ENCODE measurements at regions of chr17 and their contacts with region 1.

Region 1: GRCh38 chr17:75430159-75430974 is 24.9 kb upstream of the GRB2 start:
- DNase-seq: no peak
- ATAC-seq: peak in 1 of 8 donors; percentile 18
- H3K4me3 ChIP-seq: no peak overlapping the region
- H3K27ac ChIP-seq: peak overlapping the region in 2 of 10 donors; percentile 10 to 50
- H3K4me1 ChIP-seq: peaks cover 0 to 31% (median 14%) of the 10 kb centered on the region in 9 donors
- H3K27me3 ChIP-seq: no peaks in the 10 kb centered on the region
- CTCF ChIP-seq: no peak

Region 2: GRCh38 chr17:75289115-75289831 is 141.1 kb before region 1 on chr17 and contains the start of gene SLC25A19:
- intact Hi-C with region 1: no loop called
- DNase-seq: peak; percentile 98 to 99
- ATAC-seq: peak; percentile 98 to 100 (median 99)
- H3K4me3 ChIP-seq: peak within 1 kb of the TSS; percentile 59 to 98 (median 90)
- H3K27ac ChIP-seq: peak within 1 kb of the TSS; percentile 46 to 97 (median 90)
- H3K4me1 ChIP-seq: peaks cover 0 to 42% (median 10%) of the 10 kb centered on the region in 9 donors
- H3K27me3 ChIP-seq: no peaks in the 10 kb centered on the region
- CTCF ChIP-seq: peak in 5 of 9 donors; percentile 16 to 35 (median 28)
- total RNA-seq, gene SLC25A19: 6.8 to 19.2 (median 11.3) TPM

Region 3: DNA sequence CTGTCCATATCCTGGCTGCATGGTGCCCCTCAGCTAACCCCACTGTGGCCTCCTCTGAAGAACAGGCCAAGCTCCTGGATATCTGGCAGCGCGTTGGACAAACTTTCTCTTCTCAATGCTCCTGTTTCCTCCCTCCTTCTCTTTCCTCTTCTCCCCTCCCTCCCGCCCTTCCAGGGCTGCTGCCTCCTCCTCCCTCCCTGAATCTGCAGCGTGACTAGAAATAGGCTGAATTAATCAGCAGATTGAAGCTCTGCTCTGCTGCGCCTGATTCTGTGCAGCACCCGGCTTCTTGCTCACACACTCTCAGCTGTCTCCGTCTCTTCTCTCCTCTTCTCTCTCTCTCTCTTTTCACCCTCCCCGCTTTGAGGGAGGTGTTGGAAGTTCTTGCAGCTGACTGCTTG is 45.9 kb after region 1 on chr17:
- intact Hi-C with region 1: loop called in 1 of 10 experiments (anchors 10 kb)
- DNase-seq: no peak
- ATAC-seq: peak; percentile 60 to 85 (median 76)
- H3K4me3 ChIP-seq: peak overlapping the region in 8 of 10 donors; percentile 8 to 44 (median 34)
- H3K27ac ChIP-seq: peak overlapping the region; percentile 57 to 90 (median 81)
- H3K4me1 ChIP-seq: peaks cover 28 to 80% (median 45%) of the 10 kb centered on the region in 9 donors
- H3K27me3 ChIP-seq: no peaks in the 10 kb centered on the region
- CTCF ChIP-seq: no peak

Region 4: GRCh38 chr17:75487351-75488070 is 57.1 kb after region 1 on chr17:
- intact Hi-C with region 1: no loop called
- DNase-seq: peak in 1 of 2 donors; percentile 36
- ATAC-seq: peak in 7 of 8 donors; percentile 27 to 60 (median 43)
- H3K4me3 ChIP-seq: peak overlapping the region in 1 of 10 donors; percentile 3
- H3K27ac ChIP-seq: peak overlapping the region in 8 of 10 donors; percentile 0 to 81 (median 60)
- H3K4me1 ChIP-seq: peaks cover 18 to 65% (median 51%) of the 10 kb centered on the region in 9 donors
- H3K27me3 ChIP-seq: no peaks in the 10 kb centered on the region
- CTCF ChIP-seq: no peak

Region 5: GRCh38 chr17:75515496-75516254 is 85.3 kb after region 1 on chr17 and contains the start of gene CASKIN2:
- intact Hi-C with region 1: loop called (anchors 1 to 10 kb)
- DNase-seq: peak; percentile 98
- ATAC-seq: peak; percentile 87 to 94 (median 92)
- H3K4me3 ChIP-seq: peak within 1 kb of the TSS; percentile 79 to 98 (median 93)
- H3K27ac ChIP-seq: peak within 1 kb of the TSS; percentile 81 to 98 (median 92)
- H3K4me1 ChIP-seq: peaks cover 20 to 58% (median 51%) of the 10 kb centered on the region in 9 donors
- H3K27me3 ChIP-seq: peaks cover 0 to 13% (median 0%) of the 10 kb centered on the region in 7 donors
- CTCF ChIP-seq: peak; percentile 93 to 100 (median 96)
- total RNA-seq, gene CASKIN2: 29.0 to 59.2 (median 37.2) TPM

Region 6: DNA sequence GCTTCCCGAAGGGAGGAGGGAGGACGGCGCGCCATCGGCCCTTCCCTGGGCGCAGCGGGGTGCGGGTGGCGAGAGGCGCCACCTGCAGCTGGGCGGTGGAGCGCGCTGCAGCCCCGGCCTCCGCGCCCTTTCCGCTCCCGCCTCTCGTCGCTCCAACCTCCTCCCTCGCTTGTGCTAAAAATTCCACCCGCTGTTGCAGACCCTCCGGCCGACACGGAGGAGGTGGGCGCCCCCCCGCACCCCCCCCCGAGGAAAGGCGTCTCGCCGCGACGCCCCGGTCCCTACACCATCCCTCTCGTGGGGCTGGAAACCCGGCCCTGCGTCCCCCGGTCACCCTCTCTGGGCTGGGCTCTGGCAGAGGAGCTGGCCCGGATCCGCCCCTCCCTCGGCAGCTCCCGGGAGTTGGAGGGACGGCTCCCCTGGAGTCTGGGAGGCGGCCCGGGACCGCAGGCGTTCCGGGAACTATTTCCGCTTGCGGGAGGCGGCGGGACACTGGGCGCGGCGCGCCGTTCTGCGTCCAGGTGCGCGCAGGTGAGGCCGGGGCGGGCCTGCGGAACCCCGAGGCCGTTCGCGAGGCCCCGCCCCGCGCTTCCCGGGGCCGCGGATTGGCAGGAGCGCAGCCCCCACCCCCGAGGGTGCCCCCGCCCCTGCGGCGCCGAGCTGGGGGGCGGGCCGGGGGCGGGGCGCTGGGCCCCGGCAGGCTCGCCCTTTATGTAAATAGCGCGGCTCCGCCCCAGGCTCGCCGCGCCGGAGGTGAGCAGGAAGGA is 94.8 kb after region 1 on chr17 and contains the start of gene LLGL2:
- intact Hi-C with region 1: loop called in 1 of 10 experiments (anchors 2 kb)
- DNase-seq: peak in 1 of 2 donors; percentile 75
- ATAC-seq: peak; percentile 81 to 92 (median 86)
- H3K4me3 ChIP-seq: peak within 1 kb of the TSS; percentile 7 to 80 (median 68)
- H3K27ac ChIP-seq: peak within 1 kb of the TSS in 9 of 10 donors; percentile 26 to 78 (median 64)
- H3K4me1 ChIP-seq: peaks cover 0 to 23% (median 16%) of the 10 kb centered on the region in 9 donors
- H3K27me3 ChIP-seq: peaks cover 0 to 18% (median 0%) of the 10 kb centered on the region in 7 donors
- CTCF ChIP-seq: peak; percentile 15 to 74 (median 49)
- total RNA-seq, gene LLGL2: 1.1 to 5.0 (median 2.6) TPM

Region 7: GRCh38 chr17:75589012-75589918 is 158.9 kb after region 1 on chr17:
- intact Hi-C with region 1: loop called in 8 of 10 experiments (anchors 2 to 10 kb)
- DNase-seq: peak; percentile 97 to 99
- ATAC-seq: peak; percentile 88 to 94 (median 92)
- H3K4me3 ChIP-seq: peak overlapping the region; percentile 56 to 89 (median 74)
- H3K27ac ChIP-seq: peak overlapping the region; percentile 92 to 99 (median 96)
- H3K4me1 ChIP-seq: peaks cover 9 to 31% (median 21%) of the 10 kb centered on the region in 9 donors
- H3K27me3 ChIP-seq: peaks cover 0 to 8% (median 0%) of the 10 kb centered on the region in 7 donors
- CTCF ChIP-seq: peak; percentile 50 to 83 (median 68)

Region 8: DNA sequence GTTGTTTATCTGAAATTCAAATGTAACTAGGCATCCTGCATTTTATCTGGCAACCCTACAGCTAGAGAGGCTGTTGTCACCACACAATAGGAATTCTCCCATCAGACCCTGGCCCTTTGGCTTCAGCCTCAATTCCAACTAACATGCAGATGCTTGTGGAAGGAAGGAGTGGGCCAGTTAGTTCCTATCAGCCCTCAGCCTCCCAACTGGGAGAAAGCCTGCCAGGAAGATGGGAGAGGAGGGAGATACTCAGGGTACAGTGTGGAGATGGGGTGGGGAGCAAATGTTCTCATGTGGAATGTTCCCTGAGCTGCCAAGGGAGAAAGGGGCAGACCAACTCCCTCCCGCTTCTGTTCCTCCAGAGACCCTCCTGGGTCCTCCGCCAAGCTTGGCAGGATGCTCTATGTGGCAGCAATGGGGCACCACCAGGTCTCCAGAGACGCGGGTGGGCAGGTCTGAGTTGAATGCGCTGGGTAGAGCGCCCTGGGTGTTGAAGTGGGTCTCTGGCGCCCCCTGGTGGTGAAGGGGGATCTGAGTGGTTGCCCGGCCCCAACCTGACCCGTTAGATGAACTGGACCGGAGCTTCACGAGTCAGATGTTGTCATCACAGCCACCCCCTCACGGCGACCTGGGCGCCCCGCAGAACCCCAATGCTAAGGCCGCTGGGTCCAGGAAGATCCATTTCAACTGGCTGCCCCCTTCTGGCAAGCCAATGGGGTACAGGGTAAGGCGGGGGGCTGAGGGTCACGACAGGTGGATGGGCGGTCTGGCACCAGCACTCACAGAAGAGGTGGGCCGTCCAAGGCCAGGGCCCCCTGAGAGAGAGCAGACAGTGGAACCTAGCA is 319.4 kb after region 1 on chr17:
- intact Hi-C with region 1: loop called in 4 of 10 experiments (anchors 5 to 10 kb)
- DNase-seq: peak; percentile 86 to 88
- ATAC-seq: peak; percentile 68 to 88 (median 78)
- H3K4me3 ChIP-seq: no peak overlapping the region
- H3K27ac ChIP-seq: no peak overlapping the region
- H3K4me1 ChIP-seq: peaks cover 7 to 36% (median 26%) of the 10 kb centered on the region in 9 donors
- H3K27me3 ChIP-seq: no peaks in the 10 kb centered on the region
- CTCF ChIP-seq: peak; percentile 95 to 98 (median 96)

Measured in heart right ventricle (tissue), 16 donors.